ENCODE measurements at regions of chr7 and their contacts with region 1.

Region 1: GRCh38 chr7:99881370-99881769 is 4.5 kb upstream of the OR2AE1 start:
- DNase-seq: no peak
- ATAC-seq: no peak
- H3K4me3 ChIP-seq: no peak overlapping the region
- H3K4me3 Mint-ChIP-seq: no peak overlapping the region
- H3K27ac ChIP-seq: no peak overlapping the region
- H3K27ac Mint-ChIP-seq: no peak overlapping the region
- H3K4me1 ChIP-seq: no peaks in the 10 kb centered on the region
- H3K4me1 Mint-ChIP-seq: peaks cover 4% of the 10 kb centered on the region
- H3K27me3 ChIP-seq: no peaks in the 10 kb centered on the region
- H3K27me3 Mint-ChIP-seq: no peaks in the 10 kb centered on the region
- CTCF ChIP-seq: no peak

Region 2: DNA sequence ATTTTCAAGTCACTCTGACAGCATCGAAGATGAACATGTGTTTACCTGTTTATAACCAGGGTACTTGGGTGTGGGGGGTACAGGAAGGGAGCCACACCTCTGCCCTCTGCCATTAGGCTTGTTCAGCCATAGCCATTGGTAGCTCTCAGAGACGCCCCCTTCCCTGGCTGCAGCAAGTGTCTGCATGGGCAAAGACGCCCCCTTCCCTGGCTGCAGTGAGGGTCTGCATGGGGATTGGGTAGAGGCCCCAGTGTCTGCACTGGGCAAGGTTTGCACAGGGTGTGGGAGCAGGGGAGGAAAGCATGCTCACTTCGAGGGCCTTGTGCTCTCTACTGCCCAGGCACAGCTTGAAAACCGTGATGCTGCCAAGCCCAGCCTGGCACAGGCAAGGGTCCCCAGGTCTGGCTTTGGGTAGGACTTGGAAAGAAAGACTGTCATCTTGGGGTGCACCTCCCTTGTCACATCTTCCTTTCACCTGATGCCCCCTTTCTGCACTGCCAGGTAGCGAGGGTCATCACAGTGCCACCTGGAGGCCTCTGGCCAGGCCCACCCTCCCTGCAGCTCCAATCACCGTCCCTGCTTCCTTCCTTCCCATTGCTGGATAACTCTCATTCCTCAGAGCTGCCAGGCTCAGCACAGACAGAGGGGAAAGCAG is 279.6 kb before region 1 on chr7:
- CTCF ChIA-PET with region 1: no interaction called
- POLR2A ChIA-PET with region 1: no interaction called
- intact Hi-C with region 1: no loop called
- DNase-seq: no peak
- ATAC-seq: no peak
- H3K4me3 ChIP-seq: no peak overlapping the region
- H3K4me3 Mint-ChIP-seq: no peak overlapping the region
- H3K27ac ChIP-seq: no peak overlapping the region
- H3K27ac Mint-ChIP-seq: no peak overlapping the region
- H3K4me1 ChIP-seq: no peaks in the 10 kb centered on the region
- H3K4me1 Mint-ChIP-seq: peaks cover 7% of the 10 kb centered on the region
- H3K27me3 ChIP-seq: no peaks in the 10 kb centered on the region
- H3K27me3 Mint-ChIP-seq: no peaks in the 10 kb centered on the region
- CTCF ChIP-seq: no peak

Region 3: GRCh38 chr7:99863847-99864440 is 17.4 kb before region 1 on chr7:
- CTCF ChIA-PET with region 1: no interaction called
- POLR2A ChIA-PET with region 1: no interaction called
- intact Hi-C with region 1: no loop called
- DNase-seq: no peak
- ATAC-seq: no peak
- H3K4me3 ChIP-seq: no peak overlapping the region
- H3K4me3 Mint-ChIP-seq: no peak overlapping the region
- H3K27ac ChIP-seq: no peak overlapping the region
- H3K27ac Mint-ChIP-seq: no peak overlapping the region
- H3K4me1 ChIP-seq: no peaks in the 10 kb centered on the region
- H3K4me1 Mint-ChIP-seq: no peaks in the 10 kb centered on the region
- H3K27me3 ChIP-seq: no peaks in the 10 kb centered on the region
- H3K27me3 Mint-ChIP-seq: peaks cover 26% of the 10 kb centered on the region
- CTCF ChIP-seq: no peak

Region 4: GRCh38 chr7:99897322-99898022 is 16.1 kb after region 1 on chr7:
- CTCF ChIA-PET with region 1: no interaction called
- POLR2A ChIA-PET with region 1: no interaction called
- intact Hi-C with region 1: loop called in 1 of 2 experiments (anchors 1 kb)
- DNase-seq: peak in 1 of 9 experiments; percentile 21
- ATAC-seq: peak; percentile 26
- H3K4me3 ChIP-seq: no peak overlapping the region
- H3K4me3 Mint-ChIP-seq: no peak overlapping the region
- H3K27ac ChIP-seq: peak overlapping the region in 1 of 2 experiments; percentile 9
- H3K27ac Mint-ChIP-seq: peak overlapping the region; percentile 67
- H3K4me1 ChIP-seq: no peaks in the 10 kb centered on the region
- H3K4me1 Mint-ChIP-seq: peaks cover 8% of the 10 kb centered on the region
- H3K27me3 ChIP-seq: no peaks in the 10 kb centered on the region
- H3K27me3 Mint-ChIP-seq: no peaks in the 10 kb centered on the region
- CTCF ChIP-seq: no peak

Measured in CD8-positive, alpha-beta T cell (primary cell).